ENCODE measurements at regions of chr11 and their contacts with region 1.

Region 1: DNA sequence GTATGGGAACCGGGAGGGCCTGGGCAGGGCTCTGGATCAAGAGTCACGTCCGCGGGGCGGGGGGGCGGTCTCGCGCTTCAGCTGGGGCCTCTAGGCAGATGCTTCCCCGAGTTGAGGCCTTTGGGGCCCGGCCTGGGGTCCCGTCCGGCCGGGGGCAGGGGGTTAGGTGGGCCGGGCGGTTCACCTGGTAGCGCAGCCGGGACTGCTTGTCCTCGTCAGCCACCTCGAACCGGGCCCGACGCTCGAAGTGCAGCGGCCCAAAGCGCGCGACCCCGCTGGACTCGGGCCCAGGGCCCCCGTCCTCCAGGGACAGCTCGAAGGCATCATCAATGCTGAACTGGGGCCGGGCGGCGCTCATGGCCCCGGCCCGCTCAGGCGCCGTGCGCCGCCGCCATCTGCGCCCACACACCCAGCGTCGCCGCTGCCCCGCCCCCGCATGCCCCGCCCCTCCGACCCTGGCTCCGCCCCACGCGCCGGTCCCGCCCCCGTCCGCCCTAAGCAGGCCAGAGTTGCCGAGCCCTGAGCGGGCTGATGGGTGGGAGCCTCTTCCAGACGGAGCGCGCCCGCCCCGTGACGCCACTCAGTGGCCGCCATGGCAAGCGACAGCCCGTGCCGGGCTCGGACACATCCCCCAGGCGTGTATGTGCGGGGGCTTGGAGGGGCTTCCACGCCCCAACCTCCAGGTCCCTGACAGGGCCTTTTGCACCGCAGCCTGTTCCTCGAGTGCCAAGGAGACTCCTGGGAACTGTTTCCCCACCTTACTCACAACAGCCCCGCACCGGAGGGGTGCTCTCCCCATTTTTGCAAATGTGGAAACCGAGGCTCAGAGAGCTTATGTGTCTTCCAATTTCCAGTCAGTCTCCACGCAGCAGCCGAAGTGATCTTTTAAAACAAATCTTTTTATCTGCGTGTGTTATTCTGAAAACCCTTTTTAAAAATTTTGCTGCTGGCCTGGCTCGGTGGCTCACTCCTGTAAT is at the start of gene TMEM134:
- DNase-seq: peak; percentile 97
- H3K4me3 ChIP-seq: peak within 1 kb of the TSS; percentile 71 to 95 (median 88)
- H3K27ac ChIP-seq: peak within 1 kb of the TSS; percentile 89 to 93 (median 92)
- H3K4me1 ChIP-seq: peaks cover 25 to 52% (median 46%) of the 10 kb centered on the region in 4 donors
- H3K27me3 ChIP-seq: no peaks in the 10 kb centered on the region
- CTCF ChIP-seq: peak; percentile 51 to 61 (median 55)
- EP300 ChIP-seq: no peak
- POLR2A ChIP-seq: peak; percentile 41
- total RNA-seq, gene TMEM134: 36.1 to 48.7 (median 46.2) TPM

Region 2: DNA sequence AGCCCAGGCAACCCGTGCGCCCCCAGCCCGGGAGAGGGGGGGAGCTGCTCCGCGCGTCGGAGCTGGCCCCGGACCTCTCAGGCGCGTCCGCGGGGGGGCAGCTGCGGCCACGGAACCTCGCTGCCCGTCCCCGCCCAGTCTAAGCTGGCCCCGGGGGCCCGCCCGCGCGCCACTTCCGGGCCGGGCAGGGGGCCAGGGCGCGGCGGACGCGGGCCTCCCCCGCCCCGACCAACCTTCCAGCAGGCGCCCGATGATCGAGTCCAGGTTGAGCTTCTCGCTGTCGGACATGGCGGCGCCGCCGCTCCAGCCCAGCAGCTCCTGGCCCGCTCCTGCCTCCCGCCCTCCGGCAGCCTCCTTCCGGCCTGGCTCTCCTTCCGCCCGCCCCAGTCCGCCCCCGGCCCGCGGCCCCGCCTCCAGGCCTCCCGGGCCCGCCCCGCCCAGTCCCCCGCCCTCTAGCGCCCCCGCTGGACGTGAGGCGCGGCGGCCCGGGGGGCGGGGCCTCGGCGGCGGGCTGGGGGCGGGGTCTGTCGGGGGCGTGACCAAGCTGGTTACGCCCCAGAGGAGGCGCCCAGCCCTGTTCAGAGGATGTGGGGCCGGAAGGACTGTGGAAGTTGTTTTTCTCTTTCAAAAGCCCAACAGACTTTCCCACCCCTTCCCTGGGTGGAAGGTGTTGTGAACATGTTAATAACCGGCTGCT is 67.5 kb before region 1 on chr11 and contains the start of gene PPP1CA:
- intact Hi-C with region 1: loop called (anchors 5 kb)
- DNase-seq: peak; percentile 97
- H3K4me3 ChIP-seq: peak within 1 kb of the TSS; percentile 80 to 92 (median 88)
- H3K27ac ChIP-seq: peak within 1 kb of the TSS; percentile 93 to 98 (median 94)
- H3K4me1 ChIP-seq: peaks cover 23 to 52% (median 43%) of the 10 kb centered on the region in 4 donors
- H3K27me3 ChIP-seq: peaks cover 0 to 37% (median 0%) of the 10 kb centered on the region in 4 donors
- CTCF ChIP-seq: peak; percentile 29 to 74 (median 37)
- EP300 ChIP-seq: no peak
- POLR2A ChIP-seq: no peak
- total RNA-seq, gene PPP1CA: 56.9 to 87.3 (median 78.7) TPM

Region 3: GRCh38 chr11:68076371-68077042 is 607.4 kb after region 1 on chr11:
- intact Hi-C with region 1: no loop called
- DNase-seq: no peak
- H3K4me3 ChIP-seq: no peak overlapping the region
- H3K27ac ChIP-seq: no peak overlapping the region
- H3K4me1 ChIP-seq: peaks cover 0 to 1% (median 0%) of the 10 kb centered on the region in 4 donors
- H3K27me3 ChIP-seq: no peaks in the 10 kb centered on the region
- CTCF ChIP-seq: peak in 2 of 3 experiments; percentile 5 to 7
- EP300 ChIP-seq: no peak
- POLR2A ChIP-seq: no peak

Measured in esophagus muscularis mucosa (tissue), 4 donors.